Panc1 (cell line): ENCODE measurements at regions of chr18 and their contacts with region 1.

Region 1: GRCh38 chr18:21134898-21135297 is 23.3 kb upstream of the ROCK1 start:
- DNase-seq: no peak
- ATAC-seq: no peak
- H3K4me3 ChIP-seq: no peak overlapping the region
- H3K27ac ChIP-seq: no peak overlapping the region
- H3K4me1 ChIP-seq: no peaks in the 10 kb centered on the region
- H3K27me3 ChIP-seq: no peaks in the 10 kb centered on the region
- CTCF ChIP-seq: peak; percentile 28; the same call in 1 of the 2 replicates

Region 2: DNA sequence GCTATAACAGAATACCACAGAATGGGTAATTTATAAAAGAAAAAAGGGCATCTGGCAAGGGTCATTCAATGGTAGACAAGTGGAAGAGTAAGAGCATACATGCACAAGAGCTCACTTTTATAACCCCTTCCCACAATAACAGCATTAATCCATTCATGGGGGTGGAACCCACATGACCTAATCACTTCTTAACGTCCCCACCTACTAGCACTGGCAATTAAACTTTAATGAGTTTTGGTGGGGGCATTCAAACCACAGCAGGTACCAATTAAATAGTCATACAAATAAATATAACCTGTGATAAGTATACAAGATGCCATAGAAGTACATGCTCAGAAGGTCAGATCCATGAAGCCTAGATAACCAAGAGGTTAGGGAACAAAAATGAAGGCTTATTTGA is 71.9 kb before region 1 on chr18:
- CTCF ChIA-PET with region 1: no interaction called
- POLR2A ChIA-PET with region 1: no interaction called
- in situ Hi-C with region 1: no loop called
- intact Hi-C with region 1: loop called (anchors 2 kb)
- DNase-seq: no peak
- ATAC-seq: no peak
- H3K4me3 ChIP-seq: no peak overlapping the region
- H3K27ac ChIP-seq: no peak overlapping the region
- H3K4me1 ChIP-seq: no peaks in the 10 kb centered on the region
- H3K27me3 ChIP-seq: no peaks in the 10 kb centered on the region
- CTCF ChIP-seq: no peak

Region 3: DNA sequence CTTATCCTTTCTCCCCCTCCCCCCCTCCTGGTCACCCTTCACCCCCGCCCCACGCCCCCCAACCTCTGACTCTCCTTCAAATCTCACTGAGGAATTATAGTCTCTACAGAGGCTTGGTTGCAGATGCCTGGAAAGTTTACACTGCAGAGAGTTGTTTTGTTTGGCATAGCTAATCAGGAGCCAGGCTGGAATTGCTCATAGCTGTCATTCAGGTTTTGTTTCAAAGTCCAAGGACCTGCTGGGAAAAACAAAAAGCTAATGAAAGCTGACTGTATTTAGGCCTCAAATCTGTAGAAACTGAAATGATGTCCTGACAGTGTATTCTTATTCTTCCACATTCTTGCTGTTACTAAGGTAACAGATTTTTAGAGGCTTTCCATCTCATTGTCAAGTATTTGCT is 129.8 kb after region 1 on chr18:
- CTCF ChIA-PET with region 1: no interaction called
- POLR2A ChIA-PET with region 1: no interaction called
- in situ Hi-C with region 1: no loop called
- intact Hi-C with region 1: no loop called
- DNase-seq: no peak
- ATAC-seq: no peak
- H3K4me3 ChIP-seq: no peak overlapping the region
- H3K27ac ChIP-seq: no peak overlapping the region
- H3K4me1 ChIP-seq: peaks cover 4% of the 10 kb centered on the region
- H3K27me3 ChIP-seq: no peaks in the 10 kb centered on the region
- CTCF ChIP-seq: no peak